Calu3 (cell line): ENCODE measurements at regions of chr2 and their contacts with region 1.

Region 1: DNA sequence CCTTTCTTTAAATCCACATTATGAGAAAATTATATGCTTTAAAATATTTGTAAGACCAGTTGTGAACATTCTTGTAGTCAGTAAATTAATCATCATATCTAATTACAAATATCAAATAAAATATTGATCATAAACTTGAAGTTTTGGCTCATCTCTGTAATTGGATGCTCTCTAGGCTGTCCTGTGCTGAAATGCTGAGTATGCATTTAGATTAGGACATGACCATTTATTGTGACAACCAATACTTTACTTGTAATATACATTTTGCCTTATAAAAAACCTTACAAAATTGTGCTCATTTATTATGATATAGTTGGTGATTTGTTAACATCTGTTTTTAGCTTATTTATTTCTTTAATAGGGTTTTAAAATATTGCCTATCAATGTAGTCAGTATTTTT is 116.1 kb upstream of the DOCK10 start:
- DNase-seq: no peak
- H3K4me3 Mint-ChIP-seq: no peak overlapping the region
- H3K27ac Mint-ChIP-seq: no peak overlapping the region
- H3K4me1 Mint-ChIP-seq: no peaks in the 10 kb centered on the region
- H3K27me3 Mint-ChIP-seq: no peaks in the 10 kb centered on the region
- CTCF ChIP-seq: no peak

Region 2: DNA sequence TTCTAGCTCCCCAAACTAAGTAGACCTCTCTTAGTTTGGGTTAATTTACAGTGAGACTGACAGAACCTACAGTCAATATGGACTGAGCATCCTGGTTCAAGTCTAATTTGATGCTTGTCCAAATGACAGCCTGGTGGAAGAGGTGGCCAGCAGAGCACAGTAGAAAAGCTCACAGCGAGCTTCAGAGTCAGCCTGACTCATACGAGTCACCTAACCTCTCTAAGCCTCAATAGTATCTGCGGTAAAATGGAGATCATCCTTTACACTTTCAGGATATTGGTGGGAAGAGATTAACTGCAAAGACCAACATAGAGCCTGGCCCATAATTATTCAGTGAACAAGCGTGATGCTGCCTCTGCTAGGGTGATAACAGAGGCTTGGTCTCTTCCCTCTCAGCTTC is 170.6 kb before region 1 on chr2:
- CTCF ChIA-PET with region 1: no interaction called
- intact Hi-C with region 1: no loop called
- DNase-seq: no peak
- H3K4me3 Mint-ChIP-seq: no peak overlapping the region
- H3K27ac Mint-ChIP-seq: no peak overlapping the region
- H3K4me1 Mint-ChIP-seq: no peaks in the 10 kb centered on the region
- H3K27me3 Mint-ChIP-seq: no peaks in the 10 kb centered on the region
- CTCF ChIP-seq: no peak

Region 3: GRCh38 chr2:225137971-225138370 is 20.4 kb before region 1 on chr2:
- CTCF ChIA-PET with region 1: no interaction called
- intact Hi-C with region 1: no loop called
- DNase-seq: no peak
- H3K4me3 Mint-ChIP-seq: no peak overlapping the region
- H3K27ac Mint-ChIP-seq: no peak overlapping the region
- H3K4me1 Mint-ChIP-seq: no peaks in the 10 kb centered on the region
- H3K27me3 Mint-ChIP-seq: no peaks in the 10 kb centered on the region
- CTCF ChIP-seq: no peak

Region 4: DNA sequence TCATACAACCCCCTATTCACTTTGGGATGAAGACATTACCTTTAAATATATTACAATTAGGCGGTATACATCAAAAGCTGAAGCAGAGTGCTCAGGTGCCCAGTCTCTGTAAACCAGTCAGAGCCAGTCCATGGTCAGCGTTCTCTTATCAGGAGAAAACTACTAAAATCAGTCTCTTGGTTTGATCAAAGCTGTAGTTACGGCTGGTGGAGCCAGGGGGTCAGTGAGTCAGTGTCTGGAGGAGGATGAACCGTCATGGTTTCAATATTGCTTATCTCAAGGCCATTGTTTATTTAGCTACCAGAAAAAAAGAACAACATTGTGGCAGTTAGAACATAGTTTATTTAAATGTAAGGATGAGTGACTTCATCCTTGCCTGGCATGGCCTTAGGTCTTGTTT is 169.8 kb after region 1 on chr2:
- CTCF ChIA-PET with region 1: no interaction called
- intact Hi-C with region 1: no loop called
- DNase-seq: no peak
- H3K4me3 Mint-ChIP-seq: no peak overlapping the region
- H3K27ac Mint-ChIP-seq: no peak overlapping the region
- H3K4me1 Mint-ChIP-seq: no peaks in the 10 kb centered on the region
- H3K27me3 Mint-ChIP-seq: no peaks in the 10 kb centered on the region
- CTCF ChIP-seq: no peak

Region 5: DNA sequence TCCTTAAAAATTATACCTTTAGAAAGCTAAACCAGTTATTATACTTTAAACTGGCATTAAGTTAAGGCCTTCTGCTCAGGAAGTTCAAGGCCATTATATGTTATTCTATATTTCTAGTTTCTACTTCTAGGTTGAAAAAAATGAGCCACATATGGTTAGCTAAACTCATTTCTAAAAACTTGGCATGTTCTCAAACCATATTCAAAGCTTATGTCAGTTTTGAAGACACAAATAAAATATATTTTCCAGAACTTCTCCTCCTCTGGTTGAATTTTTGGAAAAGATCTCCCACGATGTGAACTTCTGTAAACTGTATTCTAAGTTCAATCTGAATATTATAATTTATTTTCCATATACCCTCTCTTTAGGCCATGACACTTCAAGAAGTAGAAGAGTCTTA is 344.6 kb after region 1 on chr2:
- CTCF ChIA-PET with region 1: interaction called, 10 read pairs
- intact Hi-C with region 1: no loop called
- DNase-seq: no peak
- H3K4me3 Mint-ChIP-seq: no peak overlapping the region
- H3K27ac Mint-ChIP-seq: no peak overlapping the region
- H3K4me1 Mint-ChIP-seq: no peaks in the 10 kb centered on the region
- H3K27me3 Mint-ChIP-seq: no peaks in the 10 kb centered on the region
- CTCF ChIP-seq: no peak